Testis (tissue), 5 donors: ENCODE measurements at regions of chr7 and their contacts with region 1.

Region 1: GRCh38 chr7:5083311-5083711 is 37.7 kb downstream of the RBAK start:
- DNase-seq: no peak
- H3K4me3 ChIP-seq: no peak overlapping the region
- H3K27ac ChIP-seq: no peak overlapping the region
- H3K4me1 ChIP-seq: no peaks in the 10 kb centered on the region
- H3K27me3 ChIP-seq: no peaks in the 10 kb centered on the region
- CTCF ChIP-seq: no peak
- POLR2A ChIP-seq: no peak

Region 2: DNA sequence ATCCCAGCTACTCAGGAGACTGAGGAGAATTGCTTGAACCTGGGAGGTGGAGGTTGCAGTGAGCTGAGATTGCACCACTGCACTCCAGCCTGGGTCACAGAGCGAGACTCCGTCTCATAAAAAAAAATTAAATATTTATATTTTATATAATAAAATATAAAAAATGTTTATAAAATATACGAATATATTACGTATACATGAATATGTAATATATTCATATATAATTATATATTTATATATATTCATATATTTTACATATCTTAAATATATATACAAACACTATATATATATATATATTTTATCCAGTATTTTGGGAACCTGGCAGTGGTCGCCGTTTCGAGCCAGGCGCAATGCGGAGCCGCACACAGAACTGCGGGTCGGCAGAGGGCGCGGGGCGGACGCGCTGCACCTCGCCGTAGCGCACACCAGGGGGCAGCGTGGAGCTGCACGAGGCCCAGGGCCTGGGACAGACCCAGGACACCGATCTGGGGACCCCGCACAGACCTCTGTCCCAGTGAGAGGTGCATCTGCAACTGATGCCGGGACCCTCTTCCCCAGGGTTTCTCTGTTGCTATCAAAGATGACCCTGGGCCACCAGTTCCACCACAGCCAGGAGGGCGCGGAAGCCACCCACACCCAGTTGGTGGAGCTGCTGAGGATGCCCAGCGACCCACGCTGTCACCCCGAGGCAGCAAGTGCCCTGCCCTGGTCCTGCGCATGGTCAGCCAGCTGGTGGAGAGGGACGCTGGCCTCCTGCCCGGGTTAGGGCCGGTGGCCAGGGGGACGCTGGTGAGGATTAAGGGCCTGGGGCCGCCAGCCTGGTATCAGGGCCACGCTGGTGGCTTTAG is 285.2 kb before region 1 on chr7:
- intact Hi-C with region 1: loop called (anchors 10 kb)
- DNase-seq: peak; percentile 44
- H3K4me3 ChIP-seq: no peak overlapping the region
- H3K27ac ChIP-seq: no peak overlapping the region
- H3K4me1 ChIP-seq: peaks cover 4% of the 10 kb centered on the region
- H3K27me3 ChIP-seq: no peaks in the 10 kb centered on the region
- CTCF ChIP-seq: peak; percentile 61 to 85 (median 72)
- POLR2A ChIP-seq: no peak